PC-3 (cell line): ENCODE measurements at regions of chr4 and their contacts with region 1.

Region 1: DNA sequence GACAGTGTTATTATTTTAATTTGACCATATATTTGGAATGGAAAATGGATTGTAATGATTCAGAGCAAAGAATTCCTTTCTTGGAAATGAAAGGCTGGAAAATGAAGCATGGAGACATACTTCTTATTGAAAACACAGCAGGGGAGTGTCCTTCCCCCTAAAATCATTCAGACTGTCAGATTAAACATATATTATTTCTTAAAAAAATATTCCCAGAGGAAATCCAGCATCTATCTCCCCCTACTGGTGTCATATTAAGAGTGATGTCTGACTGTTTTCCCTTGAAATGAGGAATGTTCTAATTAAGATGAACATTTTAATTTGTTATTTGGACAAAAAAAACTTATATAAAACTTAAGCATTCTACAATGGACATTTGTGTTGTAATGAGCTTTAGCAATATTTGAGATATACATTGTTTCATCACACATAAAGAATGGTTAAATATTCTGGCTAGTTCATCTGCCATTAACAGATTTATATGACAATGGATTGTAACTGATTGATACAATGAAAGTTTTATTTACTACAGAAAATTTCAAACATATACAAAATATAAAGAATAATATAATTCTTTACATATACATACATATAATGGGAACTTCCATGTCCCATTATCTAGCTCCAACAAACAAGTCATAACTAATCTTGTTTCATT is 264.6 kb downstream of the SPRY1 start:
- DNase-seq: peak; percentile 56
- ATAC-seq: no peak
- H3K4me3 ChIP-seq: no peak overlapping the region
- H3K27ac ChIP-seq: no peak overlapping the region
- H3K4me1 ChIP-seq: no peaks in the 10 kb centered on the region
- H3K27me3 ChIP-seq: no peaks in the 10 kb centered on the region
- CTCF ChIP-seq: peak; percentile 65

Region 2: DNA sequence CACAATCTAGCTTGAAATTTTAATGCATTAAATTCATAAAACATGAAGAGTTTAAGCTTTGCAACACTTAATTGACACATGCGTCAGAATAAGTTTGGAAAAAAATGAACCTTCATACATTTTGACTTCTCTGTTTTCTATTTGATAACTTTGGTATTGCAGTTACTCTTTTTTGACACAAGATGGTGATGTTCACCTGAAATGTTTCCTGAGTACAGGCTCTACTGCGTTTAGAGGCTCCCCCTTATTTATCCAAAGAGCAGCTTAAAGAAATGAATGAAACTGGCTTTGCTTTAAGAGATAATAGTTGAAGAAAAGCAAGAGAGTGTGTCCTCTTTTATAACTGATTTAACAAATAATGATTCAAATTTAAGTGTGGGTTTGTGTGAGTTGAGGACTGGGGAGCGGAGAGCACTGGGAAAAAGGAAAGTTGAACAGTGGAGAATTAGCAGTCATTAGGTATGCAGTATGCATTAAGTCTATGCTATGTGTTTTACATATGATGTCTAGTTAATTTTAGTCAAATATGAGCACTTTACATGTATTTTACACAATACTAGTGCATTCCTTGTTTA is 558.2 kb before region 1 on chr4:
- CTCF ChIA-PET with region 1: no interaction called
- POLR2A ChIA-PET with region 1: no interaction called
- intact Hi-C with region 1: loop called (anchors 1 kb)
- DNase-seq: peak; percentile 54
- ATAC-seq: peak; percentile 54; the same call in 1 of the 2 replicates
- H3K4me3 ChIP-seq: no peak overlapping the region
- H3K27ac ChIP-seq: no peak overlapping the region
- H3K4me1 ChIP-seq: no peaks in the 10 kb centered on the region
- H3K27me3 ChIP-seq: no peaks in the 10 kb centered on the region
- CTCF ChIP-seq: peak; percentile 82

Region 3: DNA sequence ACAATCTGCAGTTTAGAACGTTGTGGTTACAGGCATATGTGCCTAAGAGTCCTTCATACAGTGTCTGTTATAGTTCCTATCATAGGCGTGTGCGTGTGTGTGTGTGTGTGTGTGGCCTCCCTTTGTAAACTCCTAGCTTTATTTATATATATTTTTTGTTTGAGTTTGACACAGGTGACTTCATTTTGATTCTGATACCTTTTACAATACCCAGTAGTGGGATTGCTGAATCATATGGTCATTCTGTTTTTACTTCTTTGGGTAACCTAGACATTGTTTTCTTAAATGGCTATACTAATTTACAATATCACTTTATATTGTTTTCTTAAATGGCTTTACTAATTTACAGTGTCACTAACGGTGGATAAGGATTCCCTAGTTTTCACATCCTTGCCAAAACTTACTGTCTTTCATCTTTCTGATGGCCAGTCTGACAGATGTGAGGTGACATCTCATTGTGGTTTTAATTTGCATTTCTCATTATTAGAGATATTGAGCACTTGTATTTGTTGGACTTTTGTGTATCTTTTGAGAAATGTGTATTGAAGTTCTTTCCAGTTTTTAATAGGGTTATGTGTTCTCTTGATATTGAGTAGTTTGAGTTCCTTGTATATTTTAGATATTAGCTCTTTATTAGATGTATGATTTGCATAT is 527.7 kb before region 1 on chr4:
- CTCF ChIA-PET with region 1: no interaction called
- POLR2A ChIA-PET with region 1: no interaction called
- intact Hi-C with region 1: no loop called
- DNase-seq: no peak
- ATAC-seq: no peak
- H3K4me3 ChIP-seq: no peak overlapping the region
- H3K27ac ChIP-seq: no peak overlapping the region
- H3K4me1 ChIP-seq: no peaks in the 10 kb centered on the region
- H3K27me3 ChIP-seq: no peaks in the 10 kb centered on the region
- CTCF ChIP-seq: no peak

Region 4: DNA sequence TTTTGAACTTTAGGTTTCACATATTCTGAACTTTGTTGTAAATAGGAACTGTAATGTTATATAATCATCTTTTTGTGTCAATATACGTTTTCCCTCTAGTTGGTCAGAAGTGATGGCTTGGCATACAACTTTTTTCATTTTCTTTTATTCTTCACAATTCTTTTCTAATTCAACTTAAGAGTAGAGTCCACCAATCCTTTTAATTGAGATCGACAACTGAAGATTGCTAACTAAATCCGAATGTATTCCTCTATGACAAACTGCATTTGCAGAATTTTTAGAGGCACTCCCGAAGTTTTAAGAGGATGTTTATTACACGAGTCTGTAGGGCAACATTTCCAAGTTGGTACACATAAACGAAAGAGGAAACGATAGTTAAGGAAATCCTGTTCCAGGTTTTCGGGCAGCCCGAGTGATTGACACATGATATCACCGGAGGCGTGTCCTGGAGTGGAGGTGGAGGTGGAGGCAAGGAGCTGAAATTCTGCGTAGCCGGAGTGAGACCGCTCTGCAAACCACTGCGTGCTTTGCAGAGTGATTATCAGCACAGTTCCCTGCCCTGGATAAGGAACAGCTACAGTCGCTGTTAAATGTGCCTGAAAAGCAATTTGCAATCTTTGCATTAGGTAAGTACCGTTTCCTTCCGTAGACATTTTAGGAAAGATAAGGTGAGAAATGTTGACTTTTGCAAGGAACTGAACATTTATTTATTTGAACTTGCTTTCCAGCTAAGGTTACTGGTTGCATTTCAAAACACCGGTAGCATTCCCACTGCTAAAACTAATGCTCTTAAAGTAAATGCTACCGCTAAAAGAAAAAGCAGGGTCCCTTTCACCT is 264.7 kb before region 1 on chr4 and contains the start of gene SPRY1:
- CTCF ChIA-PET with region 1: interaction called, 3 read pairs
- POLR2A ChIA-PET with region 1: no interaction called
- intact Hi-C with region 1: loop called (anchors 2 kb)
- DNase-seq: peak; percentile 92
- ATAC-seq: peak; percentile 73
- H3K4me3 ChIP-seq: peak within 1 kb of the TSS; percentile 83
- H3K27ac ChIP-seq: peak within 1 kb of the TSS; percentile 72
- H3K4me1 ChIP-seq: peaks cover 4% of the 10 kb centered on the region; the same call in 1 of the 2 replicates
- H3K27me3 ChIP-seq: no peaks in the 10 kb centered on the region
- CTCF ChIP-seq: no peak
- total RNA-seq, gene SPRY1: 26.4 and 30.6 TPM in 2 replicates

Region 5: DNA sequence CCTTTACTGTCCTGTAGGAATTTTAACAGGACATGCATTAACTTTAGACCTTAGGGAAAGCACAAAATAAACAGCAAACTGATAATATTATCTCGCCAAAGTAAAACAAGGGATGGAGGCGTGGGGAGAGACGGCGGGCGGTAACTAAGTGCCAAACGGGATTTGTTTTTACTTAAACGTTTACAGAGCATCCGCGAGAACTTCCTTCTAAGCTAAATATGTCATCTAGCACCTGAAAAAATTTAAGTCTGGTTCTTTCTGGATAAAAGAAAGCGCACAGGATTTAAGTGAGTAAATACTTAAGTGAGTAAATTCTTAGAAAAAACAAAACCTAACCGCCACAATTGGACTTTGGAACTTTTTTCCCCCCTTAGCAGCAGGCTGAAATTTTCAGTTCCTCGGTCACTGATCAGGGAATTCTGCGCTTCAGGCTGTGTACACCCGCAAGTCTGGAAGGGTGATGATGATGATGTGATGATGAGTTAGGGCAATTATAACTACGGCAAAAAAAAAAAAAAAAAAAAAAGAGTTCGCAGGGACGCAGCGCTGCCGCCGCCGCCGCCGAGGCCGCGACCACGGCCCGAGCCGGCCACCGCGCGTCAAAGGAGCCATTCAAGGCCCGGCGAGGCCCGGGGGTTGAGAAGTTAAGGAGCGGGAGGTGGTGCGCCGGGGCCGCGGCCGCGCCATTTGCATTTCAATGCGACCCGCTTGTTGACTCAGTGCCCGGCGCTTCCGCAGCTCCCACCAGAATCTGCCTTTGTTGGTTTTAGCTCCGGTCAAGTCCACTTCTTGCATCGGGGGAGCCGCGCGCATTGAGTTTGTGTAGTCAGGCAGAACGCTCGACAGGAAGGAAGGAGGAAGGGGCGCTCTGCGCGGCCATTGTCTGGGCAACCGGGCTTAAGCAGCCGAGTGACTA is 155.9 kb before region 1 on chr4:
- CTCF ChIA-PET with region 1: no interaction called
- POLR2A ChIA-PET with region 1: no interaction called
- intact Hi-C with region 1: loop called (anchors 5 kb)
- DNase-seq: peak; percentile 41
- ATAC-seq: peak; percentile 66
- H3K4me3 ChIP-seq: peak overlapping the region; percentile 71
- H3K27ac ChIP-seq: peak overlapping the region; percentile 49
- H3K4me1 ChIP-seq: peaks cover 10% of the 10 kb centered on the region
- H3K27me3 ChIP-seq: no peaks in the 10 kb centered on the region
- CTCF ChIP-seq: no peak

Region 6: GRCh38 chr4:123588631-123589241 is 72.5 kb before region 1 on chr4:
- CTCF ChIA-PET with region 1: no interaction called
- POLR2A ChIA-PET with region 1: no interaction called
- intact Hi-C with region 1: loop called (anchors 1 kb)
- DNase-seq: peak; percentile 78
- ATAC-seq: peak; percentile 61
- H3K4me3 ChIP-seq: peak overlapping the region; percentile 45; the same call in 1 of the 2 replicates
- H3K27ac ChIP-seq: peak overlapping the region; percentile 98
- H3K4me1 ChIP-seq: peaks cover 26% of the 10 kb centered on the region
- H3K27me3 ChIP-seq: no peaks in the 10 kb centered on the region
- CTCF ChIP-seq: no peak